Activated B cell treated with CpG ODN at 0.5 μM for 24 hours (primary cell): ENCODE measurements at regions of chr2 and their contacts with region 1.

Region 1: GRCh38 chr2:221573430-221574230 is 1.5 kb upstream of the EPHA4 start:
- DNase-seq: peak; percentile 88
- ATAC-seq: peak; percentile 42
- H3K4me3 Mint-ChIP-seq: peak overlapping the region; percentile 89
- H3K27ac Mint-ChIP-seq: peak overlapping the region; percentile 31
- H3K4me1 Mint-ChIP-seq: peaks cover 41% of the 10 kb centered on the region
- H3K27me3 Mint-ChIP-seq: peaks cover 22% of the 10 kb centered on the region
- CTCF ChIP-seq: peak; percentile 89

Region 2: DNA sequence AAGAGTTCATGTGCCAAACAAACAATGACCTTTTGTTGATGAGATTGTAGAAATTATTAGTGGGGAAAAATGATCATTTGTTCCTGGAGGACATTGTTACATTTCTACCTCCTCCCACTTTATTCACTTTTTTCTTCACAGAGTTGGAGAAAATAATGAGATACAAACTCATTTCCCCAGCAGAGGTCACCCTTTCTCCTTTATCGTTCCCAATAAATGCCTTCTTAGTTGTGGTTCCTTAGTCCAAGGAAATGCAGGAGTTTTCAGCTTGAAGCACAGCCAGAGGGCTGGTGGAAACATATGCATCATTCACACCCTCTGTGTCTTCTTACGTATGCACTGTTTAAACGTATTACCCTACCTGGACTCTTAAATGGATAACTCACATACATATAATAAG is 1837.4 kb before region 1 on chr2:
- CTCF ChIA-PET with region 1: interaction called, 10 read pairs
- POLR2A ChIA-PET with region 1: no interaction called
- intact Hi-C with region 1: no loop called
- DNase-seq: no peak
- ATAC-seq: no peak
- H3K4me3 Mint-ChIP-seq: no peak overlapping the region
- H3K27ac Mint-ChIP-seq: no peak overlapping the region
- H3K4me1 Mint-ChIP-seq: no peaks in the 10 kb centered on the region
- H3K27me3 Mint-ChIP-seq: peaks cover 11% of the 10 kb centered on the region
- CTCF ChIP-seq: no peak

Region 3: DNA sequence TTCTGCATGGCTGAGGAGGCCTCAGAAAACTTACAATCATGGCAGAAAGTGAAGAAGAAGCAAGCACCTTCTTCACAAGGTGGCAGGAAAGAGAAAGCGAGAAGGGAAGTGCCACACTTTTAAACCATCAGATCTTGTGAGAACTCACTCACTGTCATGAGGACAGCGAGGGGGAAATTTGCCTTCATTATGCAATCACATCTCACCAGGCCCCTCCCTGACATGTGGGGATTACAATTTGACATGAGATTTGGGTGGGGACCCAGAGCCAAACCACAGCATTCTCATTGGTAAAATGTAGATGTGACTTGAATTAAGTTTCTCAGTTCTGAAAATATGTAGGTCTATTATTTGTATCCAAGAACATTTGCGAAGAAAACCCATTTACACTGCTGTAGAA is 856.3 kb before region 1 on chr2:
- CTCF ChIA-PET with region 1: no interaction called
- POLR2A ChIA-PET with region 1: no interaction called
- intact Hi-C with region 1: no loop called
- DNase-seq: no peak
- ATAC-seq: no peak
- H3K4me3 Mint-ChIP-seq: no peak overlapping the region
- H3K27ac Mint-ChIP-seq: no peak overlapping the region
- H3K4me1 Mint-ChIP-seq: no peaks in the 10 kb centered on the region
- H3K27me3 Mint-ChIP-seq: no peaks in the 10 kb centered on the region
- CTCF ChIP-seq: no peak

Region 4: DNA sequence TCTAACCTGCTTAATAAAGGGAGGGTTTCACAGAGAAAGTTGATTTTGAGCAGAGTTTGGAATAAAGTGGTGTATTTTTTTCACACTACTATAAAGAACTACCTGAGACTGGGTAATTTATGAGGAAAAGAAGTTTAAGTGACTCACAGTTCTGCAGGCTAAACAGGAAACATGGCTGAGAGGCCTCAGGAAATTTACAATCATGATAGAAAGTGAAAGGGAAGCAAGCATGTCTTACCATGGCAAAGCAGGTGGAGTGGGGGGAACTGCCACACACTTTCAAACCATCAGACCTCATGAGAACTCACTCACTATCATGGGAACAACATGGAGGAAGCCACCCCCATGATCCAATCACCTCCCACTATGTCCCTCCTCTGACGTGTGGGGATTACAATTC is 548.2 kb before region 1 on chr2:
- CTCF ChIA-PET with region 1: no interaction called
- POLR2A ChIA-PET with region 1: no interaction called
- intact Hi-C with region 1: loop called (anchors 5 kb)
- DNase-seq: no peak
- ATAC-seq: peak; percentile 78
- H3K4me3 Mint-ChIP-seq: peak overlapping the region; percentile 25
- H3K27ac Mint-ChIP-seq: peak overlapping the region; percentile 75
- H3K4me1 Mint-ChIP-seq: peaks cover 20% of the 10 kb centered on the region
- H3K27me3 Mint-ChIP-seq: peaks cover 1% of the 10 kb centered on the region
- CTCF ChIP-seq: no peak

Region 5: DNA sequence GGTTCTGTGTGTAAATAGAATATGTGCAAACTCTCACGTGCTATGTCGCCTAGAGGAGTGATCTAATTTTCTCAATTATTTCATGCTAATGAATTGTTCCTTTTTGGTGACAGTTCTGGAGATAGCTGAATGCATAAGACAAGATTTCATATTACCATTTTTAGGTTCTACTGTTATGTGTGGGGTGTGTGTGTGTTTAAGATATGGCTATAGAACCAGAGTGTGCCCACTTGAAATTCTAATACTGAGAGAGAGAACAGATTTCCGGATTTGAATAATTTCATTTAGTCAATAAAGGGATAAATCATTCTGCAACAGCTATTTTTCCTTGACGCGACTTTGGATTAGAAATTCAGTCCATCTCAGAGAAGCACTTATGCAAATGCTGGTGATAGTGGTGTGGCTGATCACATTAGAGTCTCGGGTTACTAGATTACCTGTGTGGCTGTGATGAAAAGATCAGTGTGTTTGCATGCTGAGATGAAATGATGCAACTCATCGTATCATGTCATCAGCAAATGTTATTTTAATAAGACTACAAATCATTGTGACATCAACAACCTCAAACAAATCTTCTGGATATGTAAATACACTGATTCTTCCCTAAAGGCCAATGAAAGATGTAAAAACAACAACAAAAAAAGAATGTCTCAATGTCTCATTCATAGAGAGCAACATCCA is 417.4 kb before region 1 on chr2:
- CTCF ChIA-PET with region 1: no interaction called
- POLR2A ChIA-PET with region 1: no interaction called
- intact Hi-C with region 1: no loop called
- DNase-seq: no peak
- ATAC-seq: no peak
- H3K4me3 Mint-ChIP-seq: no peak overlapping the region
- H3K27ac Mint-ChIP-seq: no peak overlapping the region
- H3K4me1 Mint-ChIP-seq: no peaks in the 10 kb centered on the region
- H3K27me3 Mint-ChIP-seq: peaks cover 2% of the 10 kb centered on the region
- CTCF ChIP-seq: no peak

Region 6: DNA sequence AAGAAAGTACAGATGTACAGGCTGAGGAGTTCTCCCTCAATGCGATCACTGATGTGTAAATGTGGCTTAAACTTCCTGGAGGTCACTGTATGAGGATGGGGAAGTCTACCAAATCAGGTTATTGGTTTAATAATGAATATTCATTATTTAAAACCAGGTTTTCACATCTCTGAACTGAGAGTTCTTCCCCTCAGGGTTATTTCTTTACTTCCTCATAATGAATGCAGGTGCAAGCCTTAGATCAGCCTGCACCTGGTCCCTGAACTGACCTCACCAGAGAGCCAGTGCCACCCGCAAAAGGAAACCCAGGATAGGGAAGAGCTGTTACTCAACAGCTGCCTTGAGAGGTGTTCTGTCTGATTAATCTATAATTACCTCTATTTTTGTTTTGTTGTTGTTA is 370.5 kb before region 1 on chr2:
- CTCF ChIA-PET with region 1: interaction called, 3 read pairs
- POLR2A ChIA-PET with region 1: no interaction called
- intact Hi-C with region 1: loop called (anchors 2 kb)
- DNase-seq: peak; percentile 31
- ATAC-seq: peak; percentile 92
- H3K4me3 Mint-ChIP-seq: peak overlapping the region; percentile 37
- H3K27ac Mint-ChIP-seq: peak overlapping the region; percentile 60
- H3K4me1 Mint-ChIP-seq: peaks cover 55% of the 10 kb centered on the region
- H3K27me3 Mint-ChIP-seq: no peaks in the 10 kb centered on the region
- CTCF ChIP-seq: no peak

Region 7: DNA sequence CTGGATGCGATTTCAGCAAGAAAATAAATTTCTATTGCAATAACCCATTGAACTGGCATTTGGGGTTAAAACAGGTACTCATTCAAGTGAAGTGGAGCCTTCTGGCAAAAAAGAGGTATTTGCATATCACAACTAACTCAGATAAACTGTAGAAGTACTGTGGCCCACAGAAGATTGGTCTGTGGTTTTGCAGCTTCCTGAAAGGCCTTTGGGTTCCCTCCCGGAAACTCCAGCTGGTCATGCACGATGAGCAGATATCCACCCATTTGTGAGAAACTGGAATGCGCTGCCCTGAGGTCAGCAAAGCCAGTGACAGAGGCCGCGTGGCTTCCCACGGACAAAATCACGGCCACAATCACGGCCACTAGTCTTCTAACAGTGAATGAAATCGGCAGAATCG is 107.9 kb before region 1 on chr2:
- CTCF ChIA-PET with region 1: no interaction called
- POLR2A ChIA-PET with region 1: no interaction called
- intact Hi-C with region 1: loop called (anchors 1 kb)
- DNase-seq: peak; percentile 16
- ATAC-seq: peak; percentile 82
- H3K4me3 Mint-ChIP-seq: peak overlapping the region; percentile 71
- H3K27ac Mint-ChIP-seq: peak overlapping the region; percentile 72
- H3K4me1 Mint-ChIP-seq: peaks cover 60% of the 10 kb centered on the region
- H3K27me3 Mint-ChIP-seq: no peaks in the 10 kb centered on the region
- CTCF ChIP-seq: no peak

Region 8: GRCh38 chr2:221614274-221614673 is 40.6 kb after region 1 on chr2:
- CTCF ChIA-PET with region 1: no interaction called
- POLR2A ChIA-PET with region 1: no interaction called
- intact Hi-C with region 1: no loop called
- DNase-seq: no peak
- ATAC-seq: no peak
- H3K4me3 Mint-ChIP-seq: no peak overlapping the region
- H3K27ac Mint-ChIP-seq: no peak overlapping the region
- H3K4me1 Mint-ChIP-seq: no peaks in the 10 kb centered on the region
- H3K27me3 Mint-ChIP-seq: peaks cover 9% of the 10 kb centered on the region
- CTCF ChIP-seq: no peak

Region 9: GRCh38 chr2:221969087-221969829 is 395.6 kb after region 1 on chr2:
- CTCF ChIA-PET with region 1: no interaction called
- POLR2A ChIA-PET with region 1: no interaction called
- intact Hi-C with region 1: loop called (anchors 5 kb)
- DNase-seq: no peak
- ATAC-seq: no peak
- H3K4me3 Mint-ChIP-seq: no peak overlapping the region
- H3K27ac Mint-ChIP-seq: no peak overlapping the region
- H3K4me1 Mint-ChIP-seq: no peaks in the 10 kb centered on the region
- H3K27me3 Mint-ChIP-seq: peaks cover 1% of the 10 kb centered on the region
- CTCF ChIP-seq: no peak